CD8-positive, alpha-beta memory T cell (primary cell): ENCODE measurements at regions of chr2 and their contacts with region 1.

Region 1: DNA sequence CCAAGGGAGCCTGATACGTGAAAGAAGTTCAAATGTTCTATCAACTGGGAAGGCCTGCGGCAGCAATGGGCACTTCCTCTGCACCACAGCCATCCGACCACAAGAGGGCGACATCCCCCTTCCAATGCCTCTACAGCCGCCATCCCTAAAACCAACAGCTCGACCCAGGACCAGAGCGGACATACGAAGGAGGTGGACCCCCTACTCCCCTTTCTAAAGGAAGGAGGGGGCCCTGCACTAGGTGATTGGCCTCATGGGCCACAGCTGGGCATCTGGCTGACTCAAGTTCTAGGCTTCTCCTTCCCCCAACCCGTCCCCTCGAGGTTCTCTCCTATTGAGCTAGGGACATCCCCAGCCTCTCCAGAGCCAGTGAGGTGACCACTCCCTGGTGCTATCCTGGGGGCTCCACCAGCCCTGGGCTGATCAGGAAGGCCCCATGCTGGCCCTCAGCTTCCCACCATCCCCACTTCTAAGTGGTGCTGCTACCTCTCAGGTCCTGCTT is 217.2 kb downstream of the TNS1 start:
- DNase-seq: peak; percentile 47 to 70 (median 56)
- H3K4me3 ChIP-seq: no peak overlapping the region
- H3K4me3 Mint-ChIP-seq: peak overlapping the region in 2 of 7 donors; percentile 15 to 35
- H3K27ac ChIP-seq: no peak overlapping the region
- H3K27ac Mint-ChIP-seq: peak overlapping the region in 2 of 8 donors; percentile 30 to 62
- H3K4me1 ChIP-seq: peaks cover 26% of the 10 kb centered on the region
- H3K4me1 Mint-ChIP-seq: peaks cover 16 to 32% (median 22%) of the 10 kb centered on the region in 3 donors
- H3K27me3 ChIP-seq: no peaks in the 10 kb centered on the region
- H3K27me3 Mint-ChIP-seq: peaks cover 4 to 12% of the 10 kb centered on the region in 2 donors

Region 2: DNA sequence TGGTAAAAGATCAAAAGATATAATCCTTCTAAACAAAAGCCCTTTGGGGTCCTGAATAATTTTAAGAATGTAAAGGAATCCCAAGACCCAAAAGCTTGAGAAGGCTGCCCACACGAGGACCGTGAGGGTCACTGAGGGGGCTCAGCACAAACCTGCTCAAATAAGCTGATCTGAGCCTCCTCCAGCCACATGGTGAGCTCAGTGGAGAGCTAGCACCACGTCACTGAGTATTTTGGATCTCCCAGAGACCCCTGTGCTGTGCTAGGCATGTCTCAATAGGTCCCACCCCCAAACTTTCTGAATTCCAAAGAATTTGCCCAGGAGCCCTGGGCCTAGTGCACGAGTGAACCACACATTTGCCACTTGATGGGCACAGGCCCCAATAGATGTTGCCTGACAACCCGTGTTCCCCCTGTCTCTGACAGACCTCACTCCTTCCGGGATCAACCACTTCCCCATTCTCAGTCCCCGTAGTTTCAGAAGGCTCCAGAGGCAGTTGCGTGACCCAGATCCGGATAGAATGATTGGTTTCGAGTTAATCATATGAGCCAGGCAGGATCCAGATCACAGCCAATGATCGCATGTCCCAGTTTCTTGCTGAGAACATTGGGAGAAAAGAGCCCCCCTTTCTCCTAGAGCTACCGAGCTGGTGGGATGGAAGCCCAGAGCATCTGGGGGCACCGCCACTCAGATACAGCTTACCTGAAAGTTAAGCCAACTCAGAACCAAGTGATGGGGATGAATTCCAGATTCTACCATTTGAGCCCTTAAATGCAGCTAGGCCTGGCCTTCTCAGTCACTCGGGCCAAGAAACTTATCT is 13.4 kb after region 1 on chr2:
- CTCF ChIA-PET with region 1: interaction called, 26 read pairs
- POLR2A ChIA-PET with region 1: no interaction called
- DNase-seq: no peak
- H3K4me3 ChIP-seq: no peak overlapping the region
- H3K4me3 Mint-ChIP-seq: no peak overlapping the region
- H3K27ac ChIP-seq: no peak overlapping the region
- H3K27ac Mint-ChIP-seq: no peak overlapping the region
- H3K4me1 ChIP-seq: no peaks in the 10 kb centered on the region
- H3K4me1 Mint-ChIP-seq: no peaks in the 10 kb centered on the region
- H3K27me3 ChIP-seq: no peaks in the 10 kb centered on the region
- H3K27me3 Mint-ChIP-seq: peaks cover 0 to 2% of the 10 kb centered on the region in 2 donors

Region 3: DNA sequence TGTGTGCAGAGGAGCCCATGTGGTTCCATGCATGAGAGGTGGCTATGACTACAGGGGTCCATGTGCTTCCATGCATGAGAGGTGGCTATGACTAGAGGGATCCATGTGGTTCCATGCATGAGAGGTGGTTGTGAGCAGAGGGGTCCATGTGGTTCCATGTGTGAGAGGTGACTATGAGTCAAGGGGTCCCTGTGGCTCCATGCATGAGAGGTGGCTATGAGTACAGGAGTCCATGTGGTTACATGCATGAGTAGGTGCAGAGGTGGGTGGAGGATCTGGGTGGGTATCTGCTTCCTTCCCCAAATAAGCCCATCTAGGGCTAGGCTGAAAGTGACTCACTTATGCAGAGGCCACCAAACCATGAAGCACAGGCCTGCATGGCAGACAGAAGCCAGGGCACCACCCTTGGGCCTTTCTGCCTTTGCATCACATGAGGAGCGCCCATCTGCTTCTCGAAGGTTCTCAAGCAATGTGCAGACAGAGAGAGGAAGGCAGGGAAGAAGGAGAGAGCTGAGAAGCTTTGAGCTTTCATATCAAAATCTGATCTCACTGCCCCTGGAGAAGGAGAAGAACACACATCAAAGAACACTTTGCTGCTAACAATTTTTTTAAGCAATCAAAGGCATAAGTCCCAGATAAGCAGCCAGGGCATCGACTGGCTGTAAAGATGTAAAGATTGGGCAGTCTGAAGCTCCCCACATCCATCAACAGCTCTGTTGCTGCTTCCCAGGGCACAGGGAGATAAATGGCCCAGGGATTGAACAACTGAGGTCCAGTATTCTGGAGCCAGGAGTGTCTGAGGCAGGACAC is 79.6 kb after region 1 on chr2:
- CTCF ChIA-PET with region 1: no interaction called
- POLR2A ChIA-PET with region 1: no interaction called
- DNase-seq: no peak
- H3K4me3 ChIP-seq: no peak overlapping the region
- H3K4me3 Mint-ChIP-seq: no peak overlapping the region
- H3K27ac ChIP-seq: no peak overlapping the region
- H3K27ac Mint-ChIP-seq: no peak overlapping the region
- H3K4me1 ChIP-seq: no peaks in the 10 kb centered on the region
- H3K4me1 Mint-ChIP-seq: no peaks in the 10 kb centered on the region
- H3K27me3 ChIP-seq: no peaks in the 10 kb centered on the region
- H3K27me3 Mint-ChIP-seq: peaks cover 2 to 10% of the 10 kb centered on the region in 2 donors

Region 4: GRCh38 chr2:217886720-217887309 is 101.2 kb after region 1 on chr2:
- CTCF ChIA-PET with region 1: interaction called, 34 read pairs
- POLR2A ChIA-PET with region 1: no interaction called
- DNase-seq: peak; percentile 24 to 68 (median 32)
- H3K4me3 ChIP-seq: no peak overlapping the region
- H3K4me3 Mint-ChIP-seq: no peak overlapping the region
- H3K27ac ChIP-seq: no peak overlapping the region
- H3K27ac Mint-ChIP-seq: no peak overlapping the region
- H3K4me1 ChIP-seq: no peaks in the 10 kb centered on the region
- H3K4me1 Mint-ChIP-seq: peaks cover 3 to 4% (median 3%) of the 10 kb centered on the region in 3 donors
- H3K27me3 ChIP-seq: no peaks in the 10 kb centered on the region
- H3K27me3 Mint-ChIP-seq: peaks cover 6 to 10% of the 10 kb centered on the region in 2 donors

Region 5: GRCh38 chr2:217993817-217994463 is 208.3 kb after region 1 on chr2:
- CTCF ChIA-PET with region 1: interaction called, 10 read pairs
- POLR2A ChIA-PET with region 1: no interaction called
- DNase-seq: peak in 4 of 5 donors; percentile 14 to 37 (median 20)
- H3K4me3 ChIP-seq: no peak overlapping the region
- H3K4me3 Mint-ChIP-seq: no peak overlapping the region
- H3K27ac ChIP-seq: no peak overlapping the region
- H3K27ac Mint-ChIP-seq: no peak overlapping the region
- H3K4me1 ChIP-seq: no peaks in the 10 kb centered on the region
- H3K4me1 Mint-ChIP-seq: no peaks in the 10 kb centered on the region
- H3K27me3 ChIP-seq: no peaks in the 10 kb centered on the region
- H3K27me3 Mint-ChIP-seq: peaks cover 8 to 46% of the 10 kb centered on the region in 2 donors